ENCODE measurements at regions of chr10 and their contacts with region 1.

Region 1: GRCh38 chr10:15719899-15720634 is at the start of gene ITGA8:
- DNase-seq: peak; percentile 40
- H3K4me3 ChIP-seq: peak within 1 kb of the TSS; percentile 29
- H3K27ac ChIP-seq: no peak within 1 kb of the TSS
- H3K4me1 ChIP-seq: no peaks in the 10 kb centered on the region
- H3K27me3 ChIP-seq: peaks cover 78% of the 10 kb centered on the region
- CTCF ChIP-seq: peak; percentile 48
- total RNA-seq, gene ITGA8: 0.07 TPM in 1 of 2 replicates, not detected in the other

Region 2: DNA sequence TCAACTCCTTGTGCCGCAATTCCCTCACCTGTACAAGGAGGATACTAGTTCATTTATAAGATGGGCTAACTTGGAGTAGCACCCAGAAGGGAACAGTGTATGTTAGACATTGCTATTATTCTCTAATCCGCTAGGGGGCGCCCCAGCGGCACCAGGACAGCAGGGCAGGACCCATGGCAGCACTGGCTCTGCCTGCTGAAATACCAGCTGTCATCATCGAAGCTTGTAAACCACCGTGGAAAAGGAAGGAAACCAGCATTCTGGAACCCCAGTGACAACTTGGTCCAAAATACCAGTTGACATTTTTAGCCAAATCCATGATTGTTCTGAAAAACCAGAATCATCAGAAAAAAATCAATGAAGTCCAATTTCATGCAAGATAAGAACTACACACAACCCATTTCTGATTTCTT is 134.8 kb before region 1 on chr10:
- CTCF ChIA-PET with region 1: interaction called, 15 read pairs
- POLR2A ChIA-PET with region 1: no interaction called
- intact Hi-C with region 1: loop called (anchors 2 kb)
- DNase-seq: peak; percentile 87
- H3K4me3 ChIP-seq: no peak overlapping the region
- H3K27ac ChIP-seq: no peak overlapping the region
- H3K4me1 ChIP-seq: no peaks in the 10 kb centered on the region
- H3K27me3 ChIP-seq: peaks cover 2% of the 10 kb centered on the region
- CTCF ChIP-seq: peak; percentile 90

Region 3: GRCh38 chr10:15642095-15642494 is 78.0 kb before region 1 on chr10:
- CTCF ChIA-PET with region 1: no interaction called
- POLR2A ChIA-PET with region 1: no interaction called
- intact Hi-C with region 1: loop called (anchors 5 kb)
- DNase-seq: peak; percentile 12
- H3K4me3 ChIP-seq: no peak overlapping the region
- H3K27ac ChIP-seq: no peak overlapping the region
- H3K4me1 ChIP-seq: no peaks in the 10 kb centered on the region
- H3K27me3 ChIP-seq: peaks cover 5% of the 10 kb centered on the region
- CTCF ChIP-seq: no peak